Sigmoid colon (tissue), 7 donors: ENCODE measurements at regions of chr3 and their contacts with region 1.

Region 1: DNA sequence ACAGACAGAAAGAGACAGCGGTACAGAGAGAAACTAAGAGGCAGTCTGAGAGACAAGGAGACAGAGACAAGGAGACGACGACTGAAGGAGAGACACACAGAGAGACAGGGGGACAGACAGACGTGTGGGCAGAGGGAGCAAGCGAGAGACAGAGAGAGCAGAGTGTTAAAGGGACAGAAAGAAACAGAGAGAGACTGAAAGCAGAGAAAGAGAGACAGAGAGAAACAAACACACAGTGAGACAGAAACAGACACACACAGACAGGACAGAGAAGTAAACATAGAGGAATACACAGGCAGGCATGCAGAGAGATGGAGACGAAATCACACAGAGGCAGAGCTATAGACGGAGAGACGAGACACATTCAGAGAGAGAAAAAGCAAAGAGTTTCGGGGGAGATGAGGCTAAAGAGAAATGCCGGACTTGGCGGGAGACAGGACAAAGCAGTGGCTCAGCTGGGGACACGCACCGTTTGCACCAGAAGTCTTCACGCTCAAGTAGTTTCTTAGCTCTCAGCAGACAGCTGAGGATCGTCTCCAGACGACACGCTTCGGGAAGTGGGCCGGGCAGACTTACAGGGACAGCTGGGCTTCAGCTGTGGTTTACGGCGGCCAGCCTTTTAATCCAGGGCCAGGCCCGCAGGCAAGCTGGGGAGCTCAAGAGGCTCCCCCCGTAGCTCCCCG is 56.0 kb upstream of the DLG1 start:
- DNase-seq: peak; percentile 88
- H3K4me3 ChIP-seq: peak overlapping the region in 3 of 4 donors; percentile 4 to 26 (median 13)
- H3K27ac ChIP-seq: peak overlapping the region in 3 of 4 donors; percentile 42 to 75 (median 71)
- H3K4me1 ChIP-seq: peaks cover 0 to 42% (median 37%) of the 10 kb centered on the region in 4 donors
- H3K27me3 ChIP-seq: no peaks in the 10 kb centered on the region
- CTCF ChIP-seq: no peak
- EP300 ChIP-seq: no peak
- POLR2A ChIP-seq: no peak

Region 2: GRCh38 chr3:197270558-197271317 is 83.7 kb before region 1 on chr3:
- intact Hi-C with region 1: no loop called
- DNase-seq: no peak
- H3K4me3 ChIP-seq: no peak overlapping the region
- H3K27ac ChIP-seq: no peak overlapping the region
- H3K4me1 ChIP-seq: peaks cover 0 to 18% (median 3%) of the 10 kb centered on the region in 4 donors
- H3K27me3 ChIP-seq: no peaks in the 10 kb centered on the region
- CTCF ChIP-seq: no peak
- EP300 ChIP-seq: no peak
- POLR2A ChIP-seq: no peak

Region 3: GRCh38 chr3:197298341-197298857 is 56.1 kb before region 1 on chr3 and contains the start of gene DLG1:
- intact Hi-C with region 1: loop called (anchors 5 kb)
- DNase-seq: peak; percentile 93
- H3K4me3 ChIP-seq: peak within 1 kb of the TSS; percentile 74 to 95 (median 92)
- H3K27ac ChIP-seq: peak within 1 kb of the TSS; percentile 88 to 95 (median 93)
- H3K4me1 ChIP-seq: peaks cover 0 to 34% (median 21%) of the 10 kb centered on the region in 4 donors
- H3K27me3 ChIP-seq: no peaks in the 10 kb centered on the region
- CTCF ChIP-seq: no peak
- EP300 ChIP-seq: no peak
- POLR2A ChIP-seq: peak; percentile 38 to 69
- total RNA-seq, gene DLG1: 62.6 to 71.0 (median 66.9) TPM

Region 4: DNA sequence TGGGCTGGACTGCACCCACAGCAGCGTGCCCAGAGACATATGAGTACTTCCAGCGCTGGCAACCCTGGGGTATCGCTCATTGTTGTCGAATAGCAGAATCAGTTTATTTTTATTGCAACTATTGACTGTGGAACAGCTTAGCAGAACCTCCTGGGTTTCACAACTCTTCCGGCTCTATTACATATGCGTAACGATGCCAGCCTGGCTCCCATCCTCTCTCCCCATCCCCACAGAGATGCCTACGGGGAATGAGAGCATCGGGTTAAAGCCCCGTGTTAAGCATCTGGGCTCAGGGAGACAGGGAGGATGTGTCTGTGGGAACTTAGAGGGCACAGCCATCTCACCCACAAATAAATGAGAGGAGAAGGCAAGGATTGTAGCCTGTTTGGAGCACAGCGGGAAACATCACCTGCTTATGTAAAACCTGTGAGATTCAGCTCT is 20.6 kb after region 1 on chr3:
- intact Hi-C with region 1: loop called (anchors 1 kb)
- DNase-seq: peak; percentile 20
- H3K4me3 ChIP-seq: no peak overlapping the region
- H3K27ac ChIP-seq: no peak overlapping the region
- H3K4me1 ChIP-seq: peaks cover 0 to 16% (median 14%) of the 10 kb centered on the region in 4 donors
- H3K27me3 ChIP-seq: no peaks in the 10 kb centered on the region
- CTCF ChIP-seq: no peak
- EP300 ChIP-seq: no peak
- POLR2A ChIP-seq: no peak